CD4-positive, alpha-beta memory T cell (primary cell): ENCODE measurements at regions of chr11 and their contacts with region 1.

Region 1: GRCh38 chr11:10792398-10792975 is 16.2 kb downstream of the EIF4G2 start:
- DNase-seq: peak; percentile 71 to 81 (median 72)
- H3K4me3 ChIP-seq: no peak overlapping the region
- H3K4me3 Mint-ChIP-seq: peak overlapping the region in 3 of 8 donors; percentile 0 to 65 (median 58)
- H3K27ac ChIP-seq: no peak overlapping the region
- H3K27ac Mint-ChIP-seq: peak overlapping the region in 1 of 7 donors; percentile 21
- H3K4me1 ChIP-seq: peaks cover 28% of the 10 kb centered on the region
- H3K4me1 Mint-ChIP-seq: peaks cover 21 to 47% (median 33%) of the 10 kb centered on the region in 4 donors
- H3K27me3 ChIP-seq: no peaks in the 10 kb centered on the region
- H3K27me3 Mint-ChIP-seq: peaks cover 1 to 2% of the 10 kb centered on the region in 2 donors

Region 2: GRCh38 chr11:10743354-10744000 is 49.0 kb before region 1 on chr11:
- CTCF ChIA-PET with region 1: no interaction called
- POLR2A ChIA-PET with region 1: no interaction called
- intact Hi-C with region 1: no loop called
- DNase-seq: peak; percentile 36 to 68 (median 52)
- H3K4me3 ChIP-seq: peak overlapping the region; percentile 0 to 3
- H3K4me3 Mint-ChIP-seq: peak overlapping the region; percentile 66 to 87 (median 80)
- H3K27ac ChIP-seq: peak overlapping the region; percentile 52
- H3K27ac Mint-ChIP-seq: peak overlapping the region; percentile 75 to 94 (median 89)
- H3K4me1 ChIP-seq: peaks cover 41% of the 10 kb centered on the region
- H3K4me1 Mint-ChIP-seq: peaks cover 30 to 66% (median 36%) of the 10 kb centered on the region in 4 donors
- H3K27me3 ChIP-seq: no peaks in the 10 kb centered on the region
- H3K27me3 Mint-ChIP-seq: no peaks in the 10 kb centered on the region

Region 3: GRCh38 chr11:10778217-10778970 is 14.1 kb before region 1 on chr11:
- CTCF ChIA-PET with region 1: interaction called, 20 read pairs
- POLR2A ChIA-PET with region 1: interaction called, 4 read pairs
- intact Hi-C with region 1: no loop called
- DNase-seq: no peak
- H3K4me3 ChIP-seq: no peak overlapping the region
- H3K4me3 Mint-ChIP-seq: no peak overlapping the region
- H3K27ac ChIP-seq: no peak overlapping the region
- H3K27ac Mint-ChIP-seq: no peak overlapping the region
- H3K4me1 ChIP-seq: no peaks in the 10 kb centered on the region
- H3K4me1 Mint-ChIP-seq: no peaks in the 10 kb centered on the region
- H3K27me3 ChIP-seq: no peaks in the 10 kb centered on the region
- H3K27me3 Mint-ChIP-seq: no peaks in the 10 kb centered on the region

Region 4: DNA sequence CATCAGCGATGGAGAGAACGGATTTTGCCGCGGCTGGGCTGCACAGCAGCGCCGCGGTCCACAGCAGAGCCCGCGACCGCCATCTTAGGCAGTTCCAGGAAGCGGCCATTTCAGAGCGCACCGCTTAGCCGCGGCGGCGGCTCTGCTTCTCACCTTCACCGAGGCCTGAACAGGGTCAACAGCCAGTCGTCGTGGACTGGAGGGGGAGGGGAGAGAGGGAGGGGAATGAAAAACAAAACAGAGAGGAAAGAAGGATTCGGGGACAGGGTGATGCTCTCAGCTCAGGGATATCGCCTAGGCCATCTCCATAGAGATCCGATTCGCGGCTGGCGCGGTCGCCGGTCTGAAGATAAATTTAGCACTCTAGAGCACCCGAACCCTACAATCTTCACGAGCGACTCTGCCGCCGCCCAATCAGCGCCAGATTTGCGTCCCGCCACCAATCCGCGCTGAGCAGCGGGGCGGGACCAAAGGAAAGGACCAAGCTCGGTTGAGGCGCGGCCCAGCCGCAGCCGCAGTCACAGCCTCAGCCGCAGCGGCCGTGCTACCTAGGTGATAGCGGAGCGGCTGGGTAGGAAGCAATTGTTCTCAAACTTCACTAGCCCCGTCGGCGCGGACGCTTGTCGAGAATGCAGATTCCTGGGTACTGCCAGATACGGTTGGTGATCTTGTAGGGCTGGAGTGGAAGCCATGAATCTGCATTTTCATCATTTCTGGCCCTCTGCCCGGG is 65.4 kb after region 1 on chr11 and contains the start of gene ZBED5:
- CTCF ChIA-PET with region 1: interaction called, 17 read pairs
- POLR2A ChIA-PET with region 1: interaction called, 33 read pairs
- intact Hi-C with region 1: no loop called
- DNase-seq: peak; percentile 95 to 97 (median 97)
- H3K4me3 ChIP-seq: peak within 1 kb of the TSS; percentile 93 to 100
- H3K4me3 Mint-ChIP-seq: peak within 1 kb of the TSS; percentile 98 to 100 (median 99)
- H3K27ac ChIP-seq: peak within 1 kb of the TSS; percentile 93
- H3K27ac Mint-ChIP-seq: peak within 1 kb of the TSS; percentile 99 to 100 (median 99)
- H3K4me1 ChIP-seq: peaks cover 36% of the 10 kb centered on the region
- H3K4me1 Mint-ChIP-seq: peaks cover 26 to 63% (median 34%) of the 10 kb centered on the region in 4 donors
- H3K27me3 ChIP-seq: no peaks in the 10 kb centered on the region
- H3K27me3 Mint-ChIP-seq: no peaks in the 10 kb centered on the region
- total RNA-seq, gene ZBED5: 126 to 129 TPM

Region 5: DNA sequence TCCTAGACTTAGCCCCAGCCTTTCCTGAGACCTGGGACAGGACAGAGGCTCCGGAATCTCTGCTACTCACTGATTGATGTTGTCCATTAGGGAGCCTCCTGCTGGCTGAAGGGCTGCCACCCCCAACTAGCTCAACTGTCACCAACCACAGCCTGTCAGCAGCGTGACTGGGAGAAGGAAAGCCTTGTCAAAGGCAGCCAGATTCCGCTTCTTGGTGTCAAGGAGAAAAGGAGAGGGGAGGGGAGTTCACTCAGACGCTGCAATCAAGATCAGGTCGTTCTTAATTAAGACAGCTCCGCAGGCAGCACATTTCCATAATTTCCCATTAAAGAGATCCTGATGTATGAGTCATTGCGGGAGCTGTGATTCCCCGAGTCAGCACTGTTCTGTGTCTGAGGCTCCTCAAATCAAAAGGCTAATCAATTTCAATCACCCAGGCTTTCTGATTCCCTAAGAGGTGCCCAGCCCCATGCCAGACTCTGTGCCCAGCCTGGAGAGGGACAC is 218.2 kb after region 1 on chr11:
- CTCF ChIA-PET with region 1: interaction called, 20 read pairs
- POLR2A ChIA-PET with region 1: no interaction called
- intact Hi-C with region 1: no loop called
- DNase-seq: peak in 2 of 5 donors; percentile 3 to 5
- H3K4me3 ChIP-seq: no peak overlapping the region
- H3K4me3 Mint-ChIP-seq: no peak overlapping the region
- H3K27ac ChIP-seq: no peak overlapping the region
- H3K27ac Mint-ChIP-seq: no peak overlapping the region
- H3K4me1 ChIP-seq: no peaks in the 10 kb centered on the region
- H3K4me1 Mint-ChIP-seq: no peaks in the 10 kb centered on the region
- H3K27me3 ChIP-seq: peaks cover 6% of the 10 kb centered on the region
- H3K27me3 Mint-ChIP-seq: peaks cover 12 to 22% of the 10 kb centered on the region in 2 donors

Region 6: DNA sequence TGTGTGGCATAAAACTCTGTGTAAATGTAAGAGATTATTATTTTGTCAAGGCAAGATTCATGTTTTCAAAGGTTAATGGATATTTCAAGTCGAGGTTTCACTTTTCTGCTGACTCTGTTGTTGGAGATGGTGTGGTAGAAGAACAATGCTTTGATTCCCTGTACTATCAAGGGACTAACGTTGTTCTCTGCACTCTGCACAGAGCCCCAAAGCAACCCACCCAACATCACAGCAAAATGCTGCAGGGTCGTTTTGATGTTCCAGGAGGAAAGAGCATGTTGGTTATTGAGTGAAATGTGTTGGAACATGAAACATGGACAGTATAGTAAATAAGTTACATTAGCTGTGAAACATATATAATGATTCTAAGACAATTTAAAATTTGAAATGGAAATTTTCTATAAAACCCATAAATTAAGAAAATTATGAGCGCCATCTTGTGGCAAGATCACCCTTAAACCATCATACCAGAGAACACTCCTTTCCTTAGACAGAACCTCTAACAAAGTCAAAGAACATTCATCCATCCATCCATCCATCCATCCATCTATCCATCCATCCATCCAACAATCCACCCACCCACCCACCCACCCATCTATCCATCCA is 229.7 kb after region 1 on chr11:
- CTCF ChIA-PET with region 1: interaction called, 258 read pairs
- POLR2A ChIA-PET with region 1: interaction called, 6 read pairs
- intact Hi-C with region 1: loop called (anchors 1 kb)
- DNase-seq: peak in 2 of 5 donors; percentile 7 to 17
- H3K4me3 ChIP-seq: no peak overlapping the region
- H3K4me3 Mint-ChIP-seq: no peak overlapping the region
- H3K27ac ChIP-seq: no peak overlapping the region
- H3K27ac Mint-ChIP-seq: no peak overlapping the region
- H3K4me1 ChIP-seq: no peaks in the 10 kb centered on the region
- H3K4me1 Mint-ChIP-seq: no peaks in the 10 kb centered on the region
- H3K27me3 ChIP-seq: no peaks in the 10 kb centered on the region
- H3K27me3 Mint-ChIP-seq: peaks cover 0 to 6% of the 10 kb centered on the region in 2 donors